Posterior vena cava (tissue), 2 donors: ENCODE measurements at regions of chr3 and their contacts with region 1.

Region 1: DNA sequence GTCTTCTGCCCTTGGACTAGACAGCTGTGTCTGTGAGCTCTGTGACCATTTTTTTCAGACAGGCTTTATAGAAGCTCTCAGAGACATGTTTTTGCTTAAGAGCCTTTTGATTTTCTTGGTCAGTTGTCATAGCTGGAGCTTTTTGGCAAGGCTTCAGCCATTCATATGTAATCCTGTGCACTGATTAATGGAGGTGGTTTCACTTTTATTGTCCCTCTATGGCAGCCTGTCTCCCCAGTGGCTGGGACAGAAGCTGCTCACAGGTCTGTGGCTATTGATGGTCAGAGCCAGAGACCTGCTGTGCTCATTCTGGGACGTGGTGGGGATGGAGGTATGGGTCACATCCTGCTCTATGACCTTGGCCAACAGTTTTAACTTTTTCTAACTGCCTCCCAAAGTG is 226.6 kb upstream of the LRRFIP2 start:
- DNase-seq: no peak

Region 2: DNA sequence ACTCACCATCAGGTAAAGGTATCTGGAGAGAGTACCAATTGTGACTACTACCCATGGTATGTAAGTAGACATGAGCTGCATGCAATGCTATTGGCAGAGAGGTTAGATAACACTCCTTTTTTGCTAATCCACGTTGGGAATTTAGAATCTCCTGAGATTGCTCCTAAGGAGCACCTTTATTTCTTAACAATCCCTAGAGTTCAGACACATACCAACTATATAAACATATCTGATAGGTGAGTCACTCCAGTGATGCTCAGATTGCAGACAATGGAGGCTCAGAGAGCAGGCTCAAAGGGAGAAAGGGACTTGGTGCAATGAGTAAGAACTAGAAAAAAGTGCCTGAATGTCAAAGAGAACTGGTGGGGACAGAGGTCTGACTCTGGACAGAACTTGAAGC is 179.5 kb before region 1 on chr3:
- intact Hi-C with region 1: no loop called
- DNase-seq: no peak

Region 3: GRCh38 chr3:37417297-37418082 is 16.5 kb after region 1 on chr3:
- intact Hi-C with region 1: loop called in 1 of 2 experiments (anchors 1 kb)
- DNase-seq: no peak

Region 4: DNA sequence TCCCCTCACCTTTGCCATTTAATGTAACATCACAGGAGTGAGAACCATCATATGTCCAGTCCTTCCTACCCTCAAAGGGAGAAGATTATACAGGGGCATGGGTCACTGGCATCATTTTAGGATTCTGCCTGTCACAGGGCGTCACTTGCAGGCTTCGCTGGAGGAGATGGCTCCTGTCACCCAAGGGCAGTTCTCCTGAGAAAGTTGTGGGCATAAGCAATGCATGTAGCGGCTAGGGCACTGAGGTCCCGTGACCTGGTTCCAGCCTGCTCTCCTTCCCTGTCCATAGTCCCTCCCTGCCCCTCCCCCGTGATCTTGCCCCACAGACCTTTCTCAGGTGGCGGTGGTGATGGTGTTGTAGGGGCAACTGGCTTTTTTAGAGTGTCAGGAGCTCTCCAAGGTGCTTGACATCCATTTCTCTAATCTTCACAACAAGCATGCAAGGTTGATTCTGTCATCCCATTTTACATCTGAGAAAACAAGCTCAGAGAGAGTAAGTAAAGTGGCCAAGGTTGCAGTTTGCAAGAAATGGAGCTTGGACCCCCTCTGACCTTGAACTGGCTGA is 219.2 kb after region 1 on chr3:
- intact Hi-C with region 1: no loop called
- DNase-seq: no peak

Region 5: GRCh38 chr3:37741644-37742043 is 340.7 kb after region 1 on chr3:
- intact Hi-C with region 1: no loop called
- DNase-seq: no peak